OCI-LY7 (cell line): ENCODE measurements at regions of chr21 and their contacts with region 1.

Region 1: GRCh38 chr21:16102113-16102512 is 372.3 kb downstream of the USP25 start:
- DNase-seq: no peak
- H3K4me3 ChIP-seq: no peak overlapping the region
- H3K27ac ChIP-seq: no peak overlapping the region
- H3K4me1 ChIP-seq: no peaks in the 10 kb centered on the region
- CTCF ChIP-seq: no peak

Region 2: DNA sequence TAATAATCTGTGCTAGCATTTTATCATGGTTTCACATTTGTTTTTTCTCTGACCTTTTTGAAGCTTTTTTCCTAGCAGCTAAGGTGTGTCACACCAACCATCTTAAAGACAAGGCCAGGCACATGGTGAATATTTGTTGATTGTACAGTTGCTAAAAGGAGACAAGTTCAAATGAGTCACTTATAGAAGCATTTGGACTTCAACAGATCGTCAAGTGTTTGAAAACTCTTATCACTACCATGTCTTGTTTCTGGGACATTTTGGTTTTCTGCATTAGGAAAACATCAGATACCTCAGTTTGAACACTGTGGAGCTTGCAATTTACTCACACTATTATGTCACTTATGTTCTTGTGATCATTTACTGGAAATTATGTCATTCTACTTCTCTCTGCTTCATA is 35.0 kb after region 1 on chr21:
- CTCF ChIA-PET with region 1: no interaction called
- POLR2A ChIA-PET with region 1: no interaction called
- intact Hi-C with region 1: no loop called
- DNase-seq: no peak
- H3K4me3 ChIP-seq: no peak overlapping the region
- H3K27ac ChIP-seq: no peak overlapping the region
- H3K4me1 ChIP-seq: no peaks in the 10 kb centered on the region
- CTCF ChIP-seq: no peak

Region 3: DNA sequence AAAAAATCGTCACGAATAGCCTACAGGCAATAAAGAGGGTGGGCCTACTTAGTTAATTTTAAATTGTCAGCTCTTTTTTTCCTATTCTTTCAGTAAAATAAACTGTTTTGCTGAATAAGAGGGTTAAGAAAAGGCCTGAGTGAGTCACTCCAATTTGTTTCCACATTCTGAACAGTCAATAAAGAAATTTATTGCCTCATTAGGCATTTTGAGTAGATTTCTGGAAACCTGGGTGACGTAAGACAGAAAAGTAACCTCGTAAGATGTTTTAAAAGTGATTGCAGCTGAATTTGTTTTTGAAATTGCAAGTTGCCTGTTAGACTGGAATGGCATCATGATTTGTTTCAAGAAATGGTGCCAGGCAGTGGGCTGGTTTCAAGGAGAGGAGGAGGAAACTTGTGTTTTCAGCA is 67.0 kb after region 1 on chr21:
- CTCF ChIA-PET with region 1: no interaction called
- POLR2A ChIA-PET with region 1: no interaction called
- intact Hi-C with region 1: loop called (anchors 10 kb)
- DNase-seq: no peak
- H3K4me3 ChIP-seq: no peak overlapping the region
- H3K27ac ChIP-seq: no peak overlapping the region
- H3K4me1 ChIP-seq: no peaks in the 10 kb centered on the region
- CTCF ChIP-seq: no peak